A673 (cell line): ENCODE measurements at regions of chr9 and their contacts with region 1.

Region 1: GRCh38 chr9:125763394-125763801 is 16.2 kb downstream of the PBX3 start:
- DNase-seq: peak; percentile 33
- H3K4me3 ChIP-seq: no peak overlapping the region
- H3K27ac ChIP-seq: no peak overlapping the region
- H3K4me1 ChIP-seq: peaks cover 9% of the 10 kb centered on the region
- H3K27me3 ChIP-seq: peaks cover 93% of the 10 kb centered on the region
- CTCF ChIP-seq: no peak

Region 2: DNA sequence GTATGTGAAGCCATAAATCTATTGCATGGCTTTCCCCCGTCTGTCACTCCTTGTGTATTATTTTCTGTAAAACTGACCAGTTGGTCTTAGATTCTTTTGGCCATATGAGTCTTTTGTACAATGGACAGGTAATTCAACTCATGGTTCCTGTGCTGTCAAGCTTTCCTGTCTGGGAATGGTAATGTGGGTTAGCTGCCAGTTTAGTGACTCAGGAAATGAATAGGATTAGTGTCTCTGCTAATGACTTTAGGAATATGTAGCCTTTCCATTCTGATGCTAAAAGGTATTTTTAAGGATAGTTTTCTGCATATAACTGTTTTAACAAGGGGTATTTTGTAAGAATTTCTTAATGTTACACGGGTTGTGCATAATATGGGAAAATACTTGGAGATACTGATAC is 166.4 kb after region 1 on chr9:
- CTCF ChIA-PET with region 1: no interaction called
- POLR2A ChIA-PET with region 1: no interaction called
- intact Hi-C with region 1: loop called (anchors 5 kb)
- DNase-seq: no peak
- H3K4me3 ChIP-seq: no peak overlapping the region
- H3K27ac ChIP-seq: no peak overlapping the region
- H3K4me1 ChIP-seq: no peaks in the 10 kb centered on the region
- H3K27me3 ChIP-seq: no peaks in the 10 kb centered on the region
- CTCF ChIP-seq: no peak

Region 3: GRCh38 chr9:126093771-126094170 is 330.4 kb after region 1 on chr9:
- CTCF ChIA-PET with region 1: no interaction called
- POLR2A ChIA-PET with region 1: no interaction called
- intact Hi-C with region 1: no loop called
- DNase-seq: no peak
- H3K4me3 ChIP-seq: no peak overlapping the region
- H3K27ac ChIP-seq: no peak overlapping the region
- H3K4me1 ChIP-seq: no peaks in the 10 kb centered on the region
- H3K27me3 ChIP-seq: no peaks in the 10 kb centered on the region
- CTCF ChIP-seq: no peak